ENCODE measurements at regions of chr1 and their contacts with region 1.

Region 1: GRCh38 chr1:229596925-229597699 is 28.8 kb downstream of the TAF5L start:
- DNase-seq: peak; percentile 53 to 94
- H3K4me3 ChIP-seq: peak overlapping the region in 1 of 2 donors; percentile 34
- H3K27ac ChIP-seq: peak overlapping the region; percentile 92 to 94
- H3K4me1 ChIP-seq: peaks cover 20 to 50% of the 10 kb centered on the region in 2 donors
- H3K27me3 ChIP-seq: no peaks in the 10 kb centered on the region
- CTCF ChIP-seq: peak in 2 of 3 experiments; percentile 21 to 39

Region 2: DNA sequence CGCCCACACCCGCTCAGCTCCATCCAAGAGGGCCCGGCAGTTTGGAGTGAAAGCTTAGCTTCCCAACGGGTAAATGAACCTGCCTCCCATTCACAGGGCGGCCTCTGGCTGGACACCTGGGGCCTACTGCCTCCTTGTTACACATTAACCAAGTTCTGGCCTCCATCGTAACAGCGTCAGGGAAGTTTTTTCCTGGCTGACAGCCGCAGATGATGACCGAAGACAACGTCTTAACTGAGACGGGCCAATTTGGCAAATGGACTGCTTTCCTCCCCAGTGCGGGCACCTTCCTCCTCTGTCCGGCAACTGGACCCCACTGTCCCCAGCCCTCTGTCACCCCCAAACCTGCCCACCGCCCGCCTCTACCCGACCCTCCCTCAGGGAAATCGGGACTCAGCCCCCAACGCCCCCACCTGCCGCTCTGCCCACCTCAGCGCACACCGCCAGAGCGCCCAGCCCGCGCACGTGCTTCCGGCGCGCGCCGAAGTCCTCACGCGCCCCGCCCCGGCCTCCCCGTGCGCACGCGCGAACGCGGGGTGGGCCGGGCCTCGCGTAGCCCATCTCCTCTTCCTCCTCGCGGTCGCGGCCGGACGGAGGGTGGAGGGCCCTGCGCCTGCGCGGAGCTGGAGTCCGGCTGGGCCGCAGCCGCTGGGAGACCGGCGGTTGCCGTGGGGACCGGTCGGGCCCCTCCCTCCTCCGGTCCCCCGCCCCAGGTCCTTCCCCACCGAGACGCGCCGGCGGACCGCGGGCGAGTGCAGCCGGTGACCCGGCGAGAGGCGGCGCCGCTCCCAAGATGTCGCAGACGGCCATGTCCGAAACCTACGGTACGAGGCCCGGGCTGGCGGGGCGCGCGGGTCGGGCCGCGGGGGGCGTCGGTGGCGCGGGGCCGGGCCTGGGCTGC is 326.3 kb before region 1 on chr1 and contains the start of gene RAB4A:
- intact Hi-C with region 1: no loop called
- DNase-seq: peak; percentile 40 to 89
- H3K4me3 ChIP-seq: peak within 1 kb of the TSS; percentile 77 to 97
- H3K27ac ChIP-seq: peak within 1 kb of the TSS; percentile 84
- H3K4me1 ChIP-seq: peaks cover 8 to 34% of the 10 kb centered on the region in 2 donors
- H3K27me3 ChIP-seq: no peaks in the 10 kb centered on the region
- CTCF ChIP-seq: no peak
- total RNA-seq, gene RAB4A: 6.0 TPM

Region 3: GRCh38 chr1:229507951-229508822 is 88.9 kb before region 1 on chr1 and contains the start of gene NUP133:
- intact Hi-C with region 1: loop called (anchors 2 kb)
- DNase-seq: peak; percentile 92 to 99
- H3K4me3 ChIP-seq: peak within 1 kb of the TSS; percentile 96 to 100
- H3K27ac ChIP-seq: peak within 1 kb of the TSS; percentile 89 to 98
- H3K4me1 ChIP-seq: peaks cover 7 to 11% of the 10 kb centered on the region in 2 donors
- H3K27me3 ChIP-seq: no peaks in the 10 kb centered on the region
- CTCF ChIP-seq: no peak
- total RNA-seq, gene NUP133: 9.3 TPM

Region 4: DNA sequence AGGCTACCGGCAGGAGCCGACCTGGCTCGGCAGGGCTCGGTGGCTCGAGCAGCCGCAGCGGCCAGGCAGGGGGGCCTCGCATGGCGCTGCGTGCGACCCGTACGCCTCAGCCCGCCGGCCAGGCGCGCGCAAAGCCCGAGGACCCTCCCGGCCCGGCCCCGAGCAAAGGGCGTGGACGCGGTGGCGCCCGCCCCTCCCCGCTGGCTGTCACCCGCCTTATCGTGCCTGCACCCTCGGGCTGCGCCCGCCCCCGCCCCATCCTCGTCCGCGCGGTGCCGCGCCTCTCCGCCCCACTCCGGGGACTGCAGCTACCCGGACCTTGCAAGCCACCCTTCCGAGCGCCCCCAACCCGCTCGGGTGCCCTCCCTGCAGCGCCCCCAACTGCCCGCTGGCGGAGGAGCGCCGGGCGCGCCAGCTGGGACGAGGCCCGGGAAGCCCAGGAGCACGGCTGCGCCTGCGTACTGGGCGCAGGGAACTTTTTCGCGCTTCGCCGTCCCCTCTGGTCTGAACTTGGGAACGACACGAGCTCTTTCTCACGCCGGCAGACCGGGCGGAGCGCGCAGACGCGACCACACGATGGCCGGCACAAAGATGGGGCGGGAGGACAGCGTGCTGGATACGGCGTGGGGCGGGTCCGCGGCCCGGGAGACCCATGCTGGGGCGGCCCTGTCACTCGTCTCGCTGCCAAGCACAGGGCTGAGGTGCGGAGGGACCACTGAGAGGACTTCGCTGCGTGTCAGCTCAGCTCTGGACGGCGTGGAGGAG is 38.4 kb before region 1 on chr1 and contains the start of gene ABCB10:
- intact Hi-C with region 1: loop called (anchors 1 kb)
- DNase-seq: peak; percentile 87 to 98
- H3K4me3 ChIP-seq: peak within 1 kb of the TSS; percentile 91 to 94
- H3K27ac ChIP-seq: peak within 1 kb of the TSS; percentile 85 to 94
- H3K4me1 ChIP-seq: peaks cover 3 to 38% of the 10 kb centered on the region in 2 donors
- H3K27me3 ChIP-seq: no peaks in the 10 kb centered on the region
- CTCF ChIP-seq: peak; percentile 81 to 89 (median 87)
- total RNA-seq, gene ABCB10: 25.2 TPM

Region 5: GRCh38 chr1:229579059-229579673 is 17.9 kb before region 1 on chr1:
- intact Hi-C with region 1: loop called (anchors 2 kb)
- DNase-seq: no peak
- H3K4me3 ChIP-seq: peak overlapping the region; percentile 31 to 35
- H3K27ac ChIP-seq: peak overlapping the region; percentile 53 to 59
- H3K4me1 ChIP-seq: peaks cover 0 to 20% of the 10 kb centered on the region in 2 donors
- H3K27me3 ChIP-seq: no peaks in the 10 kb centered on the region
- CTCF ChIP-seq: no peak